PC-3 (cell line): ENCODE measurements at regions of chr7 and their contacts with region 1.

Region 1: DNA sequence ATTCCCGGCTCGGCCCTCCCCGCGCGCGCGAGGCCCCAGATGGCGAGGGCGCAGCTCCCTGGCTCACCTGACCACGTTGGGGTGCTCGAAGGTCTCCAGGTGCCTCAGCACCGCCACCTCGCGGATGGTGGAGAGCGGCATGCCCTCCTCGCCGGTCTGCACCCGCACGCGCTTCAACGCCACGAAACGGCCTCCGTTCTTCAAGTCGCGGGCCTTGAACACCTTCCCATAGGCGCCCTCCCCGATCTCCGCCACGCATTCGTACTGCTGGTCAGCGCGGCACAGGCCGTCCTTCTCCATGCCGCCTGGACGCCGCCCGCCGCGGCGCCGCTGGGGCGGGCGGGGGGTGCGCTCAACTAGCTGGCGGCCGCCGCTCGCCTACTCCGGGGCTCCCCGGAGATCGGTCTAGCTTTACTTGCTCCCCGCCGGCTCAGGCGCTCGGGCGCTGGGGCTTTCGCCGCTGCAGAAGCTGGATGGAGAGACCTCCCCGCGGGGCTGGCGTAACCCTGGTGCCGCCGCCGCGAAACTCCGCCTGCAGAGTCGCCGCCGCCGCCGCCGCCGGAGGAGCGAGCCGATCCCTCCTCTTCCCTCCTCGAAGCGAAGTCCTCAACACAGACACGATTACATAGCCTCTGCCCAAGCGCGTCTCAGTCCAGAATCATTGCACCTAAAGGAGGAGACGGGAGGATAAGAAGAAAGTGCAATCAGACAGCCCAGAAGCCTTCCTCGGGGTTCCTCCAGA is 3.2 kb downstream of the CDK6 start:
- DNase-seq: peak; percentile 82
- ATAC-seq: peak; percentile 60
- H3K4me3 ChIP-seq: peak overlapping the region; percentile 82
- H3K27ac ChIP-seq: peak overlapping the region; percentile 66
- H3K4me1 ChIP-seq: peaks cover 31% of the 10 kb centered on the region
- H3K27me3 ChIP-seq: no peaks in the 10 kb centered on the region
- CTCF ChIP-seq: peak; percentile 79

Region 2: DNA sequence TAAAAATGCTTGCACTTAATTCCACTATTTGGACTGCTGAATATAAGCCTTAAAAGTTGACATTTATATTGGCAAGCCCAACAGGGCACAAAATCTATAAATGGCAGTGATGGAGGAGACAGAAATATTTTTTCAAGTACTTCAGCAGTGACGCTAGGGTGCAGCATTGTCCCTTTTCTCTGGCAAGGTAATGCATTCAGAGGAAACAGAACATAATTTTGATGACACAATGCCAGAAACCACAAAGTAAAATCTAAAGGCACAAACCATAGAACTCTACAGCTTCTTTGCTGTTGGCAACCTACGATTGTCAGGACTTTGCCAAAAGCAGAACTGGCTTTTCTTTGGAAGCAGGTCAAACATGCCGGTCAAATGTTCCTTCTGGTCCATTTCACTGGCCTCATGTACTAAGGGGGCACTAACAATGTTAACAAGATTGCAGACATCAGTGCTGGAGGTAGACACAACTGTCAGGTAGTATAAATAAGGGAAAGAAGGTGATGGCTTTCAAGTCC is 212.1 kb before region 1 on chr7:
- CTCF ChIA-PET with region 1: interaction called, 10 read pairs
- POLR2A ChIA-PET with region 1: interaction called, 3 read pairs
- intact Hi-C with region 1: loop called (anchors 1 kb)
- DNase-seq: peak; percentile 88
- ATAC-seq: peak; percentile 91
- H3K4me3 ChIP-seq: no peak overlapping the region
- H3K27ac ChIP-seq: peak overlapping the region; percentile 36
- H3K4me1 ChIP-seq: peaks cover 25% of the 10 kb centered on the region
- H3K27me3 ChIP-seq: no peaks in the 10 kb centered on the region
- CTCF ChIP-seq: peak; percentile 87

Region 3: DNA sequence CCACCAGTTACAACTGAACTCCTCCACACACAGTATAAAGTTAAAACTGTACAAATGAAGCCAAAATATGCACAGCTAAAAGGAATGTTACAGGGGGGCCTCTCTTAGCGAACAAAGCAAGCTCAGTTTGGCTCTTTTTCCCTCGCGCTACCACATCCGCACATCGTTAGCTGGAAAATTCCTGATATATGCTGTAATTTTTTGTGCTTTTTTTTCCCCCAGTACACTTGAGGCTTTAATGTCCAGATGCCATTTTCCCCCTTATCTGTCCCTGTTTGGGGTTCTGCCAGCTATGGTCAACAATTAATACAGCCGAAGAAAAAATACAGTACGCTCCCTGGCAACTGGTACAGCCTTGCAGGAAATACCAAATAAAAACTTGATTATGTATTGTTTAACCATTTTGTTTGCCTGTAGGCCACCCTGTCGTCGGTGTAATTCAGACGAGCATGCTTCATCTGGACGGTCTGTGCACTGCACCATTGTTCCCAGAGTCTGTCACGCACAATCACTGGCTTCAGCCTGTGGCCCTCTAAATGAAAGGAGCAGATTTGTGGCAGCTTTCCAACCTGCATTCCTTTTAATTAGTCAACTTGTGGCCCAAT is 134.9 kb before region 1 on chr7:
- CTCF ChIA-PET with region 1: interaction called, 7 read pairs
- POLR2A ChIA-PET with region 1: interaction called, 11 read pairs
- intact Hi-C with region 1: loop called (anchors 1 kb)
- DNase-seq: no peak
- ATAC-seq: no peak
- H3K4me3 ChIP-seq: no peak overlapping the region
- H3K27ac ChIP-seq: no peak overlapping the region
- H3K4me1 ChIP-seq: peaks cover 15% of the 10 kb centered on the region
- H3K27me3 ChIP-seq: no peaks in the 10 kb centered on the region
- CTCF ChIP-seq: no peak

Region 4: GRCh38 chr7:92809397-92810241 is 23.6 kb before region 1 on chr7:
- CTCF ChIA-PET with region 1: no interaction called
- POLR2A ChIA-PET with region 1: no interaction called
- intact Hi-C with region 1: loop called (anchors 2 kb)
- DNase-seq: peak; percentile 89
- ATAC-seq: peak; percentile 96
- H3K4me3 ChIP-seq: peak overlapping the region; percentile 31
- H3K27ac ChIP-seq: peak overlapping the region; percentile 89
- H3K4me1 ChIP-seq: peaks cover 21% of the 10 kb centered on the region
- H3K27me3 ChIP-seq: no peaks in the 10 kb centered on the region
- CTCF ChIP-seq: no peak

Region 5: GRCh38 chr7:92856436-92856835 is 23.2 kb after region 1 on chr7:
- CTCF ChIA-PET with region 1: no interaction called
- POLR2A ChIA-PET with region 1: no interaction called
- intact Hi-C with region 1: no loop called
- DNase-seq: no peak
- ATAC-seq: no peak
- H3K4me3 ChIP-seq: no peak overlapping the region
- H3K27ac ChIP-seq: no peak overlapping the region
- H3K4me1 ChIP-seq: no peaks in the 10 kb centered on the region
- H3K27me3 ChIP-seq: peaks cover 4% of the 10 kb centered on the region; the same call in 1 of the 2 replicates
- CTCF ChIP-seq: no peak

Region 6: GRCh38 chr7:93055543-93056107 is 222.4 kb after region 1 on chr7:
- CTCF ChIA-PET with region 1: no interaction called
- POLR2A ChIA-PET with region 1: no interaction called
- intact Hi-C with region 1: loop called (anchors 1 kb)
- DNase-seq: peak; percentile 63
- ATAC-seq: peak; percentile 45; the same call in 1 of the 2 replicates
- H3K4me3 ChIP-seq: no peak overlapping the region
- H3K27ac ChIP-seq: no peak overlapping the region
- H3K4me1 ChIP-seq: peaks cover 4% of the 10 kb centered on the region; the same call in 1 of the 2 replicates
- H3K27me3 ChIP-seq: no peaks in the 10 kb centered on the region
- CTCF ChIP-seq: peak; percentile 72